Left ventricle myocardium superior (tissue), 1 donor: ENCODE measurements at regions of chr1 and their contacts with region 1.

Region 1: GRCh38 chr1:151189638-151190445 is at the start of gene VPS72:
- DNase-seq: peak; percentile 86
- ATAC-seq: peak; percentile 97
- total RNA-seq, gene VPS72: 40.5 TPM

Region 2: DNA sequence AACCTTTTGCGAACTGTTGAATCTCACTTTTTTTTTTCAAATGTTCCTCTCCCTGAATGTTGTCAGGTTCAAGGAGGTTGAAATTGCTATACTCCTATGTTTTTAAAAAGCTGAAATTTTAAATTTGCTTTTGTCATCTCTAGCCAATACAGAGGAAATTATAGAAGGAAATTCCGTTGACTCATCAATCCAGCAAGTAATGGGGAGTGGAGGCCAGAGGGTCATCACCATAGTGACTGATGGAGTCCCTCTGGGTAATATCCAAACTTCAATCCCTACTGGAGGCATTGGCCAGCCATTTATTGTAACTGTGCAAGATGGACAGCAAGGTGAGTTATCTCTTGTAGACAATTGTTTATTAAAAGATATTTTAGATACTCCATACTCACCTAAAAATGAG is 82.9 kb before region 1 on chr1:
- intact Hi-C with region 1: no loop called
- DNase-seq: no peak
- ATAC-seq: no peak

Region 3: GRCh38 chr1:151254217-151255213 is 64.7 kb after region 1 on chr1 and contains the start of gene PSMD4:
- intact Hi-C with region 1: loop called (anchors 5 kb)
- DNase-seq: peak; percentile 94
- ATAC-seq: peak; percentile 99
- total RNA-seq, gene PSMD4: 149 TPM